ENCODE measurements at regions of chr20 and their contacts with region 1.

Region 1: GRCh38 chr20:44253528-44253927 is 6.4 kb downstream of the GDAP1L1 start:
- DNase-seq: no peak

Region 2: DNA sequence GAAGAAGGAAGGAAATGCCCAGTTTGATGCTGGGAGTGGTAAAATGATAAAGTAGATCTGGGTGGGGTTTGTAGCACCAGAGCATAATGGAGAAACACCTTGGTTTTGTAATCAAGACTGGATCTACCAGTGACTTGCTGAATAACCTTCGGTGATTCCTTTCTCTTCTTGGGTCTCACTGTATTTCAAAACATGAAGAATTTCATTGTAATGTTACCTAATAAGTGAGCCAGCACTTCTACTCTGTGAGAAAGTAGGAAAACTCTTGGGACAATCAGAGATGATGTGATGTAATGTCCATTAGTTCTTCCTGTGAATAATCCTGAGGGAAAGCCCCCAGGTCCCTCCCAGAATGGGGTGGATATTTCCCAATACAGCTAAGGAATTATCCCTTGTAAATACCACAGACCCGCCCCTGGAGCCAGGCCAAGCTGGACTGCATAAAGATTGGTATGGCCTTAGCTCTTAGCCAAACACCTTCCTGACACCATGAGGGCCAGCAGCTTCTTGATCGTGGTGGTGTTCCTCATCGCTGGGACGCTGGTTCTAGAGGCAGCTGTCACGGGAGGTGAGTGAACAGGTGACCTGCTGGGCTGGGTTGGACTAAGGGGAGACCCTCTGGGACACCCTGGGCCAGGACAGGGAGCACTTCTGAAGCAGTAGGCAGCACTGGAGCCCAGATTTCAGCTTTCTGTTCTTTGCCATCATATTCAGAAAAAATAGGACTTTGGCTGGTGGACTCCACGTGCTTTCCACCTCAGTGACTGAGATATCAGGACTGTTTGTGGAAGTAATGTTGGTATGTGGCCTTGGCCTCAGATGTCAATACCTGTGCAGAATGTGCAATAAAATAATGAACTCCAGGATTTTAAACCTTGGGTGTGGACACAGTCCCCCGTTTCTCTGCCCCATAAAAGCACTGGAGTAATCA is 921.2 kb after region 1 on chr20 and contains the start of gene PI3:
- intact Hi-C with region 1: loop called in 1 of 2 experiments (anchors 10 kb)
- DNase-seq: no peak
- total RNA-seq, gene PI3: not detected